ENCODE measurements at regions of chr20 and their contacts with region 1.

Region 1: DNA sequence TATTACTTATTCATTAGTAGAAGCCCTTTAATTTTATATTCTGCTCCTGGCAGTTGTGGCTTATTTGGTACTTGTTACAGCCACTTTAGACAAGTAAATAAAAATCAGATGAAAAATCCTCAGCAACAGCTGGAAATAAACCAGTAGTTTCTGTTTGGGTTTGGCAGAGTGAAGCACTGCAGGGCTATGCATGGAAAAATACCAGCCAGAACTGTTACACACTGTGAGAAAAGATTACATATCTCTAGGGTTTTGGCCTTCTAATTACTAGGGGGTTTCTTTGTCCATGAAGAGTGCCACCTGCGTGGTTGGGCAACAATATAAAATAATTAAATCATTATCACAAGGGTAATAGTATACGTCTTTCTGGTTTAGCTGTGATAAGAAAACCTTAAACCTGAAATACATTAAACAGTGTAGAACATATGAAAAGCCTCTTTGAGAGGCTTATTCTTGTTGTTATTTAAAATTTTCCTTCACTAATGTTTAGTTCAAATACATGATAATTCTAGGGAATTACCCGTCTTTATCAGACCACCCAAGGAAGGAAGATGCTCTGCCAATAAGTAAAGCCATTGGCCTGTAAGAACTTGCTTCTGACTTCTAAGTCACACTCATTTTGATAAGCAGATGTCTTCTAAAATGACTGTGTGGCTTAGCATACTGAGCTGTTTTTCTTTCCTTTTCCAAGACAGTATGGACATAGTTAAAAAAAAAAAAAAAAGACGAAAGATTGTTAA is 320.0 kb upstream of the FLRT3 start:
- DNase-seq: no peak
- H3K4me3 ChIP-seq: no peak overlapping the region
- H3K27ac ChIP-seq: no peak overlapping the region
- H3K4me1 ChIP-seq: no peaks in the 10 kb centered on the region
- CTCF ChIP-seq: no peak

Region 2: GRCh38 chr20:13158369-13158768 is 1499.1 kb before region 1 on chr20:
- CTCF ChIA-PET with region 1: no interaction called
- POLR2A ChIA-PET with region 1: interaction called, 15 read pairs
- intact Hi-C with region 1: no loop called
- DNase-seq: no peak
- H3K4me3 ChIP-seq: no peak overlapping the region
- H3K27ac ChIP-seq: no peak overlapping the region
- H3K4me1 ChIP-seq: no peaks in the 10 kb centered on the region
- CTCF ChIP-seq: no peak

Region 3: DNA sequence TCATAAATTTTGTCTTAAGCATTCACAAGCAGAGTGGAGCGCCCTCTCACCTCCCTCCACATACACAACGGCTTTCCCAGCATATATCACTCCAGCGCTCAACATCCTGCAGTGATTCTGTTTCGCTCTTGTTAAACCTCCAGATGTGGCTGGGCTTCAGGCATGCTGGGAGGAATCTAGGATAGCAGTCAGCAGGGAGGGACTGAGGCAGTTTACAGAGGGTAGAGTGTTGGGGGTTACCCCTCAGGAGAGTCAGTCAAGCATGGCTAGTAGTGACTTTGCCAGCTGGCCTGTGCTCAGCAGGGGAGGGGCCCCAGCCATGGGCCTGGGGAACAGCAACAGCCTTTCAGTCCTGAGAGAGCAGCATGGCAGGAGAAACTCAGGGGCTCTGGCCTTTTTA is 158.7 kb before region 1 on chr20:
- CTCF ChIA-PET with region 1: no interaction called
- POLR2A ChIA-PET with region 1: no interaction called
- intact Hi-C with region 1: no loop called
- DNase-seq: no peak
- H3K4me3 ChIP-seq: no peak overlapping the region
- H3K27ac ChIP-seq: no peak overlapping the region
- H3K4me1 ChIP-seq: no peaks in the 10 kb centered on the region
- CTCF ChIP-seq: no peak

Region 4: GRCh38 chr20:14860410-14860814 is 203.0 kb after region 1 on chr20:
- CTCF ChIA-PET with region 1: no interaction called
- POLR2A ChIA-PET with region 1: no interaction called
- intact Hi-C with region 1: no loop called
- DNase-seq: no peak
- H3K4me3 ChIP-seq: no peak overlapping the region
- H3K27ac ChIP-seq: no peak overlapping the region
- H3K4me1 ChIP-seq: no peaks in the 10 kb centered on the region
- CTCF ChIP-seq: no peak